ENCODE measurements at regions of chr16 and their contacts with region 1.

Region 1: GRCh38 chr16:49921791-49922456 is 66.0 kb upstream of the ZNF423 start:
- DNase-seq: peak; percentile 63 to 87
- H3K4me3 ChIP-seq: no peak overlapping the region
- H3K27ac ChIP-seq: no peak overlapping the region
- H3K4me1 ChIP-seq: peaks cover 0 to 4% (median 1%) of the 10 kb centered on the region in 4 experiments; a peak in 5 of 7 replicates
- H3K27me3 ChIP-seq: no peaks in the 10 kb centered on the region; a peak in 1 of 7 replicates
- CTCF ChIP-seq: peak; percentile 76 to 95 (median 93)
- EP300 ChIP-seq: no peak; a peak in 1 of 3 replicates
- POLR2A ChIP-seq: no peak
- RAD21 ChIP-seq: peak; percentile 93 to 96

Region 2: GRCh38 chr16:49407873-49408550 is 513.9 kb before region 1 on chr16:
- CTCF ChIA-PET with region 1: interaction called, 10 read pairs
- POLR2A ChIA-PET with region 1: no interaction called
- DNase-seq: peak; percentile 73 to 91
- H3K4me3 ChIP-seq: no peak overlapping the region
- H3K27ac ChIP-seq: no peak overlapping the region
- H3K4me1 ChIP-seq: peaks cover 0 to 2% (median 0%) of the 10 kb centered on the region in 4 experiments; a peak in 1 of 7 replicates
- H3K27me3 ChIP-seq: no peaks in the 10 kb centered on the region; a peak in 1 of 7 replicates
- CTCF ChIP-seq: peak; percentile 86 to 94 (median 93)
- EP300 ChIP-seq: no peak
- POLR2A ChIP-seq: no peak
- RAD21 ChIP-seq: peak; percentile 100

Region 3: GRCh38 chr16:49876716-49877129 is 45.2 kb before region 1 on chr16:
- CTCF ChIA-PET with region 1: interaction called, 44 read pairs
- POLR2A ChIA-PET with region 1: no interaction called
- DNase-seq: peak; percentile 69 to 99
- H3K4me3 ChIP-seq: peak overlapping the region in 3 of 4 experiments; percentile 18 to 58 (median 45); a peak in 5 of 8 replicates
- H3K27ac ChIP-seq: no peak overlapping the region
- H3K4me1 ChIP-seq: peaks cover 0 to 8% (median 5%) of the 10 kb centered on the region in 4 experiments; a peak in 4 of 7 replicates
- H3K27me3 ChIP-seq: peaks cover 0 to 10% (median 4%) of the 10 kb centered on the region in 4 experiments; a peak in 3 of 7 replicates
- CTCF ChIP-seq: peak; percentile 83 to 89 (median 86)
- EP300 ChIP-seq: 0 out of 3 replicates have a peak, but pooled peaks of 1 of the 2 experiments have one; percentile 35
- POLR2A ChIP-seq: no peak
- RAD21 ChIP-seq: peak; percentile 50 to 67; a peak in 3 of 4 replicates

Region 4: GRCh38 chr16:49899991-49900695 is 21.8 kb before region 1 on chr16:
- CTCF ChIA-PET with region 1: interaction called, 23 read pairs
- POLR2A ChIA-PET with region 1: no interaction called
- DNase-seq: no peak
- H3K4me3 ChIP-seq: no peak overlapping the region
- H3K27ac ChIP-seq: no peak overlapping the region
- H3K4me1 ChIP-seq: no peaks in the 10 kb centered on the region
- H3K27me3 ChIP-seq: no peaks in the 10 kb centered on the region
- CTCF ChIP-seq: no peak
- EP300 ChIP-seq: no peak
- POLR2A ChIP-seq: no peak
- RAD21 ChIP-seq: no peak

Region 5: GRCh38 chr16:49932946-49933345 is 11.0 kb after region 1 on chr16:
- CTCF ChIA-PET with region 1: interaction called, 22 read pairs
- POLR2A ChIA-PET with region 1: no interaction called
- DNase-seq: no peak
- H3K4me3 ChIP-seq: no peak overlapping the region
- H3K27ac ChIP-seq: no peak overlapping the region
- H3K4me1 ChIP-seq: peaks cover 0 to 3% (median 1%) of the 10 kb centered on the region in 4 experiments; a peak in 3 of 7 replicates
- H3K27me3 ChIP-seq: no peaks in the 10 kb centered on the region
- CTCF ChIP-seq: no peak
- EP300 ChIP-seq: no peak
- POLR2A ChIP-seq: no peak
- RAD21 ChIP-seq: no peak